ENCODE measurements at regions of chr17 and their contacts with region 1.

Region 1: GRCh38 chr17:65231662-65232335 is 94.6 kb downstream of the RGS9 start:
- DNase-seq: peak; percentile 50
- H3K4me3 Mint-ChIP-seq: no peak overlapping the region
- H3K27ac Mint-ChIP-seq: peak overlapping the region; percentile 55
- H3K4me1 Mint-ChIP-seq: peaks cover 67% of the 10 kb centered on the region
- H3K27me3 Mint-ChIP-seq: no peaks in the 10 kb centered on the region

Region 2: GRCh38 chr17:65122836-65123756 is 108.7 kb before region 1 on chr17:
- intact Hi-C with region 1: loop called (anchors 1 kb)
- DNase-seq: peak; percentile 85
- H3K4me3 Mint-ChIP-seq: peak overlapping the region; percentile 82
- H3K27ac Mint-ChIP-seq: peak overlapping the region; percentile 95
- H3K4me1 Mint-ChIP-seq: peaks cover 35% of the 10 kb centered on the region
- H3K27me3 Mint-ChIP-seq: peaks cover 5% of the 10 kb centered on the region

Region 3: DNA sequence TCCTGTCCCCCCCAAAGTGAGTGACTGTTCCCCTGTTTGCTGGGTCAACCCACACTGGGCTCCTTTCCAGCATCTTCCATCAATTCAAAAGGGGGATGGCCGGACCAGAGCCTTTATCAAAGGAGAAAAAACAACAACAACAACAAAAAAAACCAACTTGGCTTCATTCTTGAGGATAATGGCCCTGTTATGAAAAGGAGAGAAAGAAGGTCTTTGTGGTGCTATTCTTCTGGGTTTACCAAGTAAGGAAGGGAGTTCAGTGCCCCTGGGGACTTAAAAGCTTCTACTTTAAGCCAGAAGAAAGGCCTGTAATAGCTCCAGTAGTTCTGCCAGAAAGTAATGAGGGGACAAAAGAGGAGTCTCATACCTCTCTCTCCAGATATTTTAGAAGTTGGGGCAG is 23.1 kb before region 1 on chr17:
- intact Hi-C with region 1: loop called (anchors 2 kb)
- DNase-seq: no peak
- H3K4me3 Mint-ChIP-seq: no peak overlapping the region
- H3K27ac Mint-ChIP-seq: peak overlapping the region; percentile 31
- H3K4me1 Mint-ChIP-seq: peaks cover 27% of the 10 kb centered on the region
- H3K27me3 Mint-ChIP-seq: no peaks in the 10 kb centered on the region

Region 4: DNA sequence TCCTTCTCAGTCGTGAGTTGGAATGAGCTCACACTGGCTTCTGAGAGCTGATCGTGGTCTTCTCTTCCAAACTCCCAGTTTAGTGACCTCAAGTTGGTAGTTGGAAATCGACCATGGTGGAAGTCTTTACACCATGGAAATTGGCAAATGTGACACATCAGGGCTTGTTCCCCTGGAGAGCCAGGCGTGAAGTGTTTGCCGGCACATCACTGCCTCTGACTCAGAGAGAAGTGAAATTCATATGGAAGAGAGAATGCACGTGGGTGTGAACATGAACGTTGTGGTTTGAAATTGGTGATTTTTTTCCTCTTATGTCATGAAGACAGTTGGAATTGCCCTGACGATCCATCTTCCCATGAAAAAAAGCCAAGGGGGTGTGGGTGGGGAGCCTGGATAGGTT is 282.3 kb after region 1 on chr17:
- intact Hi-C with region 1: loop called (anchors 2 kb)
- DNase-seq: no peak
- H3K4me3 Mint-ChIP-seq: no peak overlapping the region
- H3K27ac Mint-ChIP-seq: peak overlapping the region; percentile 18
- H3K4me1 Mint-ChIP-seq: peaks cover 10% of the 10 kb centered on the region
- H3K27me3 Mint-ChIP-seq: peaks cover 33% of the 10 kb centered on the region

Region 5: DNA sequence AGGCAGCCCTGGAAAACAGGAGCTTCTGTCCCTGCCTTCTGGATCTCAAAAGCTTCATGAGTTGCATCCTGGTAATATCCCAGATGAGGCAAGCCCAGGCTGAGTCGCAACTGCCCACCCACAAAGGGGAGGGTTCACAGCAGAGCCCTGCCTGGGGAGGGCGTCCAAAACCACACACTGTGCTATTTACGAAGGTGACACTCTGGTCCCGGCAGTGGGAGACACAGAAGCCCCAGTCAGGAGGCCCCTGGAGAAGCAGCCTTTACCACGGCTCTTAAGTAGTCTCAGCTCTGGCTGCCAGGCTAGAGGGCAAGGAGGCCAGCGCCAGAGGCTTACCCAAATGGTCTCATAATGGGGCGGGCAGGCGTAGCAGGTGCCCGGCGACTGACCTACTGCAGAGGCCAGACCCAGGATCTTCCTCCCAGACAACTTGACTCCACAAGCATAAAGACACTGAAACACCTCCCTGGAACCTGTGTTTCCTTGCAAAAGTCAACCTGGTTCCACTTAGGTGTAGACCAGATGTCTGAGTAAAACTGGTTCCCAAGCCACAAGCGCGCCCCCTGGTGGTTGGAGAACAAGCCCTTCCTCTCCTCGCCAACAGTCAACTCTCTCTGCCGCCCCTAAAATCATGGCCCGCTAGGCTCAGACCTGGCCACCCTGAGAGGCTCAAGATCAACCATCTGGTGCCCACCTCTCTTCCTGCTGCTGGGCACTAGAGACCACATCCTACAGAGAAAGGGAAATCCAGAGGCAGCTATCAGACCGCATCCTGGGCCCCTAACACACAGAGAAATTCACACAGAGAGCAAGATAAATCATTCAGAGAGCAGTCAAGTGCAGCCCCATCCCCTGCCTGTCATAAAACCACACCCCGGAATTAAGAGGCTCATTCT is 324.5 kb after region 1 on chr17:
- intact Hi-C with region 1: loop called (anchors 1 kb)
- DNase-seq: peak; percentile 80
- H3K4me3 Mint-ChIP-seq: no peak overlapping the region
- H3K27ac Mint-ChIP-seq: no peak overlapping the region
- H3K4me1 Mint-ChIP-seq: peaks cover 28% of the 10 kb centered on the region
- H3K27me3 Mint-ChIP-seq: peaks cover 16% of the 10 kb centered on the region

Region 6: DNA sequence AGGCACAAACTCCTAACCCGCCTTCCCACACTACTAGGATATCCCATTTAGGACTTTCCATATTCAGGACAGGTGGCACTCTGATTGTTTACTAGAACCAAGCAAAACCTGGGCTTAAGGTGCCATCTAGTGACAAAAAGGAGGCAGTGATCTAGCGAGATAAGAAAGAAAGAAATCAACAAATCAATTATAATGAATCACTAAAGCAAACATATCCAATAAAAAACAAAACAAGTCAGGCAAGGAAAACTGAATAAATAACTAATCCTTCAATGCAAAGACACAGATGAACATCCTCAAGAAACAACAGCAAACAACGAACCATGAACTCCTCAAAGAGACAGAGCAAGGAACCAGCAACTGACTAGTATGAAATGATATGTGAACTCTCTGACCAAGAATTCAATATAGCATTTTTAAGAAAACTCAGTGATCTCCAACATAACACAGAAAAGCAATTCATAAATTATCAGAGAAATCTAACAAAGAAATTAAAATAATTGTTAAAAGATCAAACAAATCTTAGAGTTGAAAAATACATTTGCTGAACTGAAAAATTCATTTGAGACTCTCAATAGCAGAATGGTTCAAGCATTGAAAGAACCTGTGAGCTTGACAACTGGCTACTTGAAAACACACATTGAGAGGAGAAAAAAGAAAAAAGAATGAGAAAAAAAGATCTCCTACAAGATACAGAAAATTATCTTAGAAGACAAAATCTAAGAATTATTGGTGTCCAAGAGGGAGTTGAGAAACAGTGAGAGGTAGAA is 756.5 kb after region 1 on chr17:
- intact Hi-C with region 1: loop called (anchors 1 kb)
- DNase-seq: no peak
- H3K4me3 Mint-ChIP-seq: no peak overlapping the region
- H3K27ac Mint-ChIP-seq: no peak overlapping the region
- H3K4me1 Mint-ChIP-seq: no peaks in the 10 kb centered on the region
- H3K27me3 Mint-ChIP-seq: peaks cover 4% of the 10 kb centered on the region

Measured in activated T-helper 2 cell treated with anti-CD3 and anti-CD28 coated beads, Interferon-gamma antibody, Interleukin-2, Interleukin-4, amounts not matched to agents 10 μg/mL and 5 μg/mL and 100 μg/mL, durations not matched to agents 14 hours and 24 hours and 36 hours (primary cell).